Activated naive CD4-positive, alpha-beta T cell treated with anti-CD3 and anti-CD28 coated beads, Interleukin-2, amount 10 ng/mL, durations not matched to agents 7 days and 5 days (primary cell): ENCODE measurements at regions of chr12 and their contacts with region 1.

Region 1: DNA sequence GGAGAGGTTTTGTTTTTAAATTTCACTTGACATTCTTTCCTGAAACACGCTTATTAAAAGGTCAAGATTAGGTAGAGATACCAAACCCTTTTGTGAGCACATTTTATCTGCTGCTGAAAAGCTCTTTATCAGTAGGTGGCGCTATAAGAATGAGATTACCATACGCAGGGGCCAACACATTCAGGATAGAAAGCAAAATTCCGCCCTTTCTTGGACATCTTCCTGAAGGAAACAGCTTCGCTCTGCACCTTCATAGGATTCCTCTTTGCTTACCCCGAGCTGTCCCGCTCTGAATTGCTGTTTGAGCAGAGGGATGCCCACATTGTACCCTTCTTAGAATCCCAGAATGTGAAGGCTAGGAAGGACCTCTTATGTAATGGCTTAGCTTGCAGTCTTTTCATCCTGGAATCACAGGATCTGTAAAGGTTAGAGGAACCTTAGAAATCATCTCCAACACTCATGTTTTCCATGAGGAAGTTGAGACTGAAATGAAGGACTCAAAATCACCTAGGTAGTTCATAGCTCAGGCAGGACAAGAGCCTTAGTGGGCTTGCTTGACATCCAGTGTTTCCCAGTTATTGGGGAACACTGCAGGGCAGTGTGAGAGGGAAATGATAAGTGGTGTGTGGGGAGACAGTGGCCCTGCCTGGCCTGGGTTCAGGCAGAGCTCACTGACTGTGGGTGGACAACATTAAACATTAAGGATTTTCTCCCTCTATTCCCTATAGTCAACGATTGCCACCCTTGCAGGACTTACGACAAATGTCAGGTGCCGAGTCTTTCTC is 38.7 kb upstream of the CRY1 start:
- DNase-seq: no peak
- H3K4me3 Mint-ChIP-seq: no peak overlapping the region
- H3K27ac Mint-ChIP-seq: no peak overlapping the region
- H3K4me1 Mint-ChIP-seq: no peaks in the 10 kb centered on the region
- H3K27me3 Mint-ChIP-seq: no peaks in the 10 kb centered on the region

Region 2: DNA sequence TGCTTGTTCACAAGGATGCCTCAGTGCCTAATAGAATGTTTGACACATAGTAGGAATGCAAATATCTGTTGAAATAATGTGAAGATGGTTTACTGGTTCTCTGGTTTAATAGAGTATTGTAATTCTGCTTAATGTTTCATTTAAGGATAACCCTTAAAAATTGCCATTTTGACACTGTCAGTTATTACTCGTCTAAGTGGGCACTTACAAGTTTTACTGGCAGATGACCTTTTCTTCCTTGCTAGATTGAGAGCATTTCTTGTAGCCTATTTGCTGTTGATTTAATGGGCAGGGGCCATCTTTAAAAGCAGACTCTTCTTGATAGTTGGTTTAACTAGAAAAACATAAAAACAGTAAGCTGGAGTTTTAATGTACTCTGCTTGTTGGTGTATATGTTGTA is 174.4 kb before region 1 on chr12:
- CTCF ChIA-PET with region 1: no interaction called
- DNase-seq: no peak
- H3K4me3 Mint-ChIP-seq: peak overlapping the region; percentile 95
- H3K27ac Mint-ChIP-seq: peak overlapping the region; percentile 91
- H3K4me1 Mint-ChIP-seq: peaks cover 32% of the 10 kb centered on the region
- H3K27me3 Mint-ChIP-seq: peaks cover 9% of the 10 kb centered on the region

Region 3: DNA sequence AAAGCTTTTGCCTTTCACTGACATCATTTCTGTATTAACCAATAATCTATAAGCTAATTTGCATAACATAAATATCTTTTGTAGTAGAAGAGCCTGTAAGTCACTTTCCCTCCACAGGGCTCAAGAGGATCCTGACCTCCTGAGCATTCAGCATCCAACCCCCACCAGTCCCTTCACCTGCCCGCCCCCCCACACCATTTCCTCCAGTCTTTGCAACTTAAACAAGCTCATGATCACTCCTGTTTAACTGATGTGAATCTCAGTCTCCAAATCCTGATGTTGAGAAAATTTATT is 26.7 kb before region 1 on chr12:
- CTCF ChIA-PET with region 1: interaction called, 16 read pairs
- DNase-seq: no peak
- H3K4me3 Mint-ChIP-seq: no peak overlapping the region
- H3K27ac Mint-ChIP-seq: no peak overlapping the region
- H3K4me1 Mint-ChIP-seq: no peaks in the 10 kb centered on the region
- H3K27me3 Mint-ChIP-seq: peaks cover 6% of the 10 kb centered on the region

Region 4: GRCh38 chr12:107118624-107119023 is 13.4 kb before region 1 on chr12:
- CTCF ChIA-PET with region 1: interaction called, 13 read pairs
- DNase-seq: no peak
- H3K4me3 Mint-ChIP-seq: no peak overlapping the region
- H3K27ac Mint-ChIP-seq: no peak overlapping the region
- H3K4me1 Mint-ChIP-seq: no peaks in the 10 kb centered on the region
- H3K27me3 Mint-ChIP-seq: peaks cover 31% of the 10 kb centered on the region

Region 5: DNA sequence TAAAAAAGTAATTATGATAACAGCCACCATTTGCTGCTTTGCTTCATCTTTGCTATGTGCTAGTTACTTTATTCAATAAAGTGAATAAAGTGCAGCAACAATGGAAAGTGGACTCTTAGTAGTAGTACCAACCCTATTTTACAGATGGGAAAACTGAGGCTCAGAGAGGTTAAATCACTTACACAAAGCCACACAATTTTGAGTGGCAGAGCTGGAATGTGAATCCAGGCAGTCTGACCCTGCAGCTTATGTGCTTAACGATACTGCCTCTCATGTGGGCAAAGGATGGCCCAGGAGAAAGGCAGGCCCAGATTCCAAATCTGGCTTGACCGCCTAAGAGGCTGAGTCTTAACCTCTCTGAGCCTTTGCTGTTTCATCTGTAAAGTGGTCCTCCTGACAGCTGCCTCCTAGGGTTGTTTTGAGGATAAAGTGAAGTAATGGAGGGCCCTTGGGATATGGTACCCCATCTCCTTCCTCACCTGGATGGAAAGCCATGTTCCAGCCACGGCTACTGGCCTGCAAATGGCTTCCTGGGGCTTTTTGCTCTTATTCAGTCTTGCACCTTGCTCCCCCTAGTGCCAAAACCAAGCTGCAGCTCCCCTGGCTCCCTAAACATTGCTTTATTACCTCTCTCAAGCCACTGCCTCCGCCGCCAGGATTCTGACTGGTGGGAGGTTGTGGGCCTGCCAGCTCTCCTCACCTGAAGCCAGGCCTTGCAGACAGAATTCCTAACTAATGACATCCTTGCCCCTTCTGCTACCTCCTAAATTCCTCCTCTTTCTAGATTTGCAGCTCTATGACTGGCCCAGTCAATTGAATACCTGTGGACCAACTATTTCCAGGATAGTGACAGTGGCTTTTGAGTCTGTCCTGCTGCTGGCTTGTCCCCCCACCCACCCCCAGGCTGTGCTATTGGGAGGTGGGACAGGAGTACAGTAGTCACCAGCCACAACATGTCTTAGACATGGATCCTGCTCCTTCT is 270.3 kb after region 1 on chr12:
- CTCF ChIA-PET with region 1: interaction called, 47 read pairs
- DNase-seq: peak; percentile 79
- H3K4me3 Mint-ChIP-seq: no peak overlapping the region
- H3K27ac Mint-ChIP-seq: peak overlapping the region; percentile 22
- H3K4me1 Mint-ChIP-seq: peaks cover 50% of the 10 kb centered on the region
- H3K27me3 Mint-ChIP-seq: no peaks in the 10 kb centered on the region

Region 6: DNA sequence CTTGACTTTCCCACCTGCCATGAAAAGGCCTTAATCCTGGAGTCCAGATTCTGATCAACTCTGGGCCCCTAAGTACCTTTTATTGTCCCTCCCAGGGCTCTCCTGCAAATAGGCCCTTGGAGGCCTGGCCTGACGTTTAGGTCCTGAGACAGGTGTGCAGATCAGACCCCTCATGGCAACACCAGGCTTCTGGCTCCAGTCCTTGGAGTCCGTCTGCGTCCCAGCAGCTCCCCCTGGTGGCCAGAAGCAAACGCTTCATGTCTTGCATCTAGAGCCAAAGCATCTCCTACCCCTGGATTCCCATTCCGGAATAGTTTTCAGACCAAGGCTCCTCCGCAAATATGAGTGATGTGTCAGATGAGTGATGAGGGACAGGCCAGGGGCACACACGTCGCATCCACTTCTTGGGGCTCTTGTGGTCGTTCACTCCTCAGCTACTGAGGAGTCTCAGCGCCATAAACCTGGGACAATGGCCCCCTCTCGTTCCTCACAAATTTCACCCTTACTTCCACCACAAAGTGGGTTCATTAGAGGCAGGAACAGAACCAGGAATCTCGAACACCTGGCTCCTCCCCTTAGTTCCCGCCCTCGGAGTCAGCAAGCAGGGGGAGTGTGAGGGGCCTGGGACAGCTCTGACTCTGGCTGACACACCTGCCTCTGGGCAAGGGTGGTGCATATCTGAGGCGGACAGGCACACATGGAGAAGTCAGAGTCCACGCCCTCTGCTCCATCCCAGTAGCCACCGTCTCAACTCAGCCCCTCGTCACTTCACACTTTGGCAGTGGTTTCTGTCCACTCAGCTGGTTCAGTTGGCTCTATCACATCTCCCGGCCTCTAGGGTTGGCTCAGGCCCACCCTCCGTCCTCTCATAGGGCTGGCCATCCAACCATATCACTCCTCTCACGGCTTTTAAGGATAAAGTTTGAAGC is 475.7 kb after region 1 on chr12:
- CTCF ChIA-PET with region 1: interaction called, 235 read pairs
- DNase-seq: peak; percentile 85
- H3K4me3 Mint-ChIP-seq: no peak overlapping the region
- H3K27ac Mint-ChIP-seq: no peak overlapping the region
- H3K4me1 Mint-ChIP-seq: no peaks in the 10 kb centered on the region
- H3K27me3 Mint-ChIP-seq: no peaks in the 10 kb centered on the region